Gastrocnemius medialis (tissue), 4 donors: ENCODE measurements at regions of chr11 and their contacts with region 1.

Region 1: DNA sequence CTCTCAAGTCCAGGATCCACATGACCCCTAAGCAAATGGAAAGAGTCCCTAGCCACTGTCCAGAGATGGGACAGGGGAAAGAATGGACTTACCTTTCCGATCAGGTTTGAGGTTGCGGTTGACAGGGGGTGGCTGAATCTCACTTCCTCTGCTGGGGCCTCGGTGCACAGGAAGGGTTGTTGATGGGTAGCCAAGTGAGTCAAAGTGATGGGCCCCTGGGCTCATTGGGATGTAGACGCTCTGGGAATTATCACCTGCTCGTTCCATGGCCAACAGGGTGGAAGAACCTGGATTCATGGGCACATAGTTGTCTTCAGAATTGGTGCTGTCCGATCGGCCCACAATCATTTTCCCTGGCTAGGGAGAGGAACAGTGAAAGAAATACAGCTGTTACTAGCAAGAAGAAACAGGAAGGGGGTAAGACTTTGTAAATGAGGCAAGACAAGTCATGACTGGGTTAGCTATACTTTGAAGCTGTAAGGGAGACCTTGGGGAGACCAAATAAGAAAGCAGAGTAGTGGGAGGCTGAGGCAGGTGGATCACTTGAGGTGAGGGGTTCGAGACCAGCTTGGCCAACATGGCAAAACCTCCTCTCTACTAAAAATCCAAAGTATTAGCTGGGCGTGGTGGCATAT is 34.7 kb downstream of the USP35 start:
- DNase-seq: no peak
- ATAC-seq: no peak
- H3K4me3 ChIP-seq: no peak overlapping the region
- H3K27ac ChIP-seq: no peak overlapping the region
- H3K4me1 ChIP-seq: no peaks in the 10 kb centered on the region
- H3K27me3 ChIP-seq: no peaks in the 10 kb centered on the region
- CTCF ChIP-seq: no peak
- POLR2A ChIP-seq: no peak

Region 2: GRCh38 chr11:78100676-78101456 is 122.6 kb before region 1 on chr11:
- in situ Hi-C with region 1: loop called in 1 of 4 experiments (anchors 25 kb)
- intact Hi-C with region 1: no loop called
- DNase-seq: no peak
- ATAC-seq: peak; percentile 61 to 80
- H3K4me3 ChIP-seq: no peak overlapping the region
- H3K27ac ChIP-seq: peak overlapping the region in 3 of 4 donors; percentile 47 to 71 (median 50)
- H3K4me1 ChIP-seq: peaks cover 0 to 14% of the 10 kb centered on the region in 2 donors
- H3K27me3 ChIP-seq: no peaks in the 10 kb centered on the region
- CTCF ChIP-seq: no peak
- POLR2A ChIP-seq: no peak

Region 3: GRCh38 chr11:78268591-78269410 is 45.4 kb after region 1 on chr11:
- in situ Hi-C with region 1: no loop called
- intact Hi-C with region 1: no loop called
- DNase-seq: peak in 1 of 2 donors; percentile 18
- ATAC-seq: peak; percentile 50 to 51
- H3K4me3 ChIP-seq: no peak overlapping the region
- H3K27ac ChIP-seq: peak overlapping the region; percentile 26 to 59 (median 47)
- H3K4me1 ChIP-seq: no peaks in the 10 kb centered on the region
- H3K27me3 ChIP-seq: no peaks in the 10 kb centered on the region
- CTCF ChIP-seq: no peak
- POLR2A ChIP-seq: no peak

Region 4: DNA sequence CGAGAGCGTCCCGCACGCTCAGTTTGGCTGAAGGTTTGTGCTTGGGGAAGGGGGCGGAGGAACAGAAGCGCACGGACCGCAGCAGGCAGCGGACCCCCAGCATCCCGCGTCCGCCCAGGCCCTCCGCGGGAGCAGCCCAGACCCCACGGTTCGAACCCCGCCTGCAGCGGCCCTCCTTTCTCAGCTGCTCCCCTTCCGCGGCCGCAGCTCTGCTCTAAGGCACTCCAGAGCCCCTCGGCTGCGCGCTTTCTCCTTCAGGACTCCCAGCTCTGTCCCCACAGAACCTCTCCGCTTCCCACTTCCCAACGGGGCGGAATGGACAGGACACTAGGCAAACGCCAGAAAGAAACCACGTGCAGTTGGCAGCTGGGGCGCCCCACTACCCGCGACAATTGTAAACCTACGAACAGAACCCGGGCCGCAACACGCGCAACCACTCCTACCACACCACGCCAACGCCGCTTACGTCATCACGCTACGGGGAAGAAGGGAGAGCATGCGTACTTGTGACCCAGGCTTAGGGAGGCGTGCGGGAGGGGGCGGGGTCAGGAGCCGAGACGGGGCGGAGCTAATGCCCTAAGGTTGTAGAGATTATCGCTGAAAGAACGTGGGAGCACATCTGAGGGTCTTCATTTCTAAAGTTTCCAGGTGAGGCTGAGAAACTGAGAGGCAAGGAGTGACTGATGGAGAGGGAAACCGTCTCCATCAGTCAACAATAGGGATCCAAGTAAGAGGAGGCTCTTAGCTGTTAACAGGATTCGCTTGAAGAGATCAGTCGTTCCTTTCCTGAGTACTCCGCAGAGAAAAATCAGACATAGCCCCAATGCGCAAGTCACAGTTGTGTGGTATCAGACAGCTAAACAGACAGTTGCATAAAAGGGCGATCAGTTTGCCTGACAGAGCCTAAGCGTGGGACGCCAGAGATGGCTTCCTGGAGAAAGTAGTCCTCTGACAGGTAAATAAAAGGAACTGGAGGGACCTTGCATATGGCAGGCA is 351.2 kb after region 1 on chr11 and contains the start of gene NARS2:
- in situ Hi-C with region 1: loop called (anchors 10 to 25 kb)
- intact Hi-C with region 1: no loop called
- DNase-seq: peak; percentile 93 to 95
- ATAC-seq: peak; percentile 98 to 99
- H3K4me3 ChIP-seq: peak within 1 kb of the TSS; percentile 71 to 99 (median 88)
- H3K27ac ChIP-seq: peak within 1 kb of the TSS; percentile 89 to 93 (median 91)
- H3K4me1 ChIP-seq: peaks cover 4 to 16% of the 10 kb centered on the region in 2 donors
- H3K27me3 ChIP-seq: no peaks in the 10 kb centered on the region
- CTCF ChIP-seq: no peak
- POLR2A ChIP-seq: peak; percentile 61 to 70
- total RNA-seq, gene NARS2: 12.9 to 29.1 (median 18.7) TPM